ENCODE measurements at regions of chr11 and their contacts with region 1.

Region 1: GRCh38 chr11:128522055-128522942 is 65.1 kb downstream of the ETS1 start:
- DNase-seq: peak; percentile 70 to 93 (median 80)
- ATAC-seq: peak; percentile 76 to 82 (median 80)
- H3K4me3 ChIP-seq: peak overlapping the region; percentile 68 to 99
- H3K4me3 Mint-ChIP-seq: peak overlapping the region; percentile 96 to 99 (median 98)
- H3K27ac ChIP-seq: peak overlapping the region; percentile 93
- H3K27ac Mint-ChIP-seq: peak overlapping the region; percentile 98
- H3K4me1 ChIP-seq: peaks cover 37 to 40% of the 10 kb centered on the region in 2 experiments
- H3K4me1 Mint-ChIP-seq: peaks cover 45 to 65% (median 50%) of the 10 kb centered on the region in 3 donors
- H3K27me3 ChIP-seq: no peaks in the 10 kb centered on the region
- H3K27me3 Mint-ChIP-seq: no peaks in the 10 kb centered on the region

Region 2: GRCh38 chr11:128190312-128190711 is 332.0 kb before region 1 on chr11:
- CTCF ChIA-PET with region 1: interaction called in 1 of 2 experiments, 10 read pairs
- POLR2A ChIA-PET with region 1: no interaction called
- DNase-seq: peak in 25 of 35 experiments; percentile 4 to 74 (median 32)
- ATAC-seq: peak in 2 of 4 experiments; percentile 37 to 51
- H3K4me3 ChIP-seq: no peak overlapping the region
- H3K4me3 Mint-ChIP-seq: peak overlapping the region in 1 of 3 donors; percentile 46
- H3K27ac ChIP-seq: peak overlapping the region; percentile 3
- H3K27ac Mint-ChIP-seq: peak overlapping the region; percentile 35 to 66
- H3K4me1 ChIP-seq: peaks cover 21 to 41% of the 10 kb centered on the region in 2 experiments
- H3K4me1 Mint-ChIP-seq: peaks cover 31 to 44% (median 37%) of the 10 kb centered on the region in 3 donors
- H3K27me3 ChIP-seq: no peaks in the 10 kb centered on the region
- H3K27me3 Mint-ChIP-seq: no peaks in the 10 kb centered on the region

Region 3: GRCh38 chr11:128323381-128323780 is 198.9 kb before region 1 on chr11:
- CTCF ChIA-PET with region 1: interaction called in 1 of 2 experiments, 12 read pairs
- POLR2A ChIA-PET with region 1: interaction called, 3 to 12 read pairs
- DNase-seq: peak in 25 of 35 experiments; percentile 25 to 77 (median 45)
- ATAC-seq: peak in 1 of 4 experiments; percentile 12
- H3K4me3 ChIP-seq: no peak overlapping the region
- H3K4me3 Mint-ChIP-seq: peak overlapping the region in 2 of 3 donors; percentile 37 to 71
- H3K27ac ChIP-seq: peak overlapping the region; percentile 98
- H3K27ac Mint-ChIP-seq: peak overlapping the region; percentile 97 to 99
- H3K4me1 ChIP-seq: peaks cover 74 to 83% of the 10 kb centered on the region in 2 experiments
- H3K4me1 Mint-ChIP-seq: peaks cover 87 to 92% (median 90%) of the 10 kb centered on the region in 3 donors
- H3K27me3 ChIP-seq: no peaks in the 10 kb centered on the region
- H3K27me3 Mint-ChIP-seq: no peaks in the 10 kb centered on the region

Region 4: DNA sequence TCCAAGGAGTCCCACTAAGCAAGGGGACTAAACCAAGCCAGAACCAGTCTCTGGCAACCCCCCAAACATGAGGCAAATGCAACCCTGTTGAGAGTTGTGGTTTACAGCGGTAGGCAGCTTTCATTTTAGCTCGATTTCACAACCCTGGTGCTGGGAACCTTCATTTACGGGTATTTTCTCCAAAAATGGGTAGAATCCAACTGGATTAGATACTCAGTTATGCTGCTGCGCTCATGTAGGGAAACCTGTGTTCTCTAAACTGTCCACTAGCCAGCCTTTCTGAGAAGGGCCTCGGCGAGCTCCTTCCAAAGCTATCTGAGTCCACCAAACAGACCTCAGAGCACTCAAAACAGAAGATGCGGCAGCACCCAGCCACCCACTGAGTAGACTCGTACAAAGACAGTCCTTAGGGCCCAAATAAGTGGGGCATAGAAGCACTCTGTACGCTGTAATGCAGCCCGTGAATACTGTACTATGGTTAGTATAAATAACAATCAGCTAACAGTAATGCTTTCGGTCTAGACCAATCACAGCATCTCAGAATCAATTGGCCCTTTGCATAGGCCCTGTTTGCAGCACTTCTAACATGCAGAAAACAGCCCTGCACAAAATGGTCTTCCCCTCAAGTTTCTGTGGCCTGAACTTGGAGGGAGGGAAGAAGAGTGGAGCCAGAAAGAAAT is 39.6 kb before region 1 on chr11:
- CTCF ChIA-PET with region 1: interaction called in 1 of 2 experiments, 6 read pairs
- POLR2A ChIA-PET with region 1: interaction called, 6 to 19 read pairs
- DNase-seq: peak in 30 of 35 experiments; percentile 38 to 85 (median 69)
- ATAC-seq: peak; percentile 66 to 75 (median 72)
- H3K4me3 ChIP-seq: peak overlapping the region in 1 of 2 donors; percentile 17
- H3K4me3 Mint-ChIP-seq: peak overlapping the region; percentile 63 to 99 (median 77)
- H3K27ac ChIP-seq: peak overlapping the region; percentile 96
- H3K27ac Mint-ChIP-seq: peak overlapping the region; percentile 98
- H3K4me1 ChIP-seq: peaks cover 76 to 84% of the 10 kb centered on the region in 2 experiments
- H3K4me1 Mint-ChIP-seq: peaks cover 96 to 100% (median 97%) of the 10 kb centered on the region in 3 donors
- H3K27me3 ChIP-seq: no peaks in the 10 kb centered on the region
- H3K27me3 Mint-ChIP-seq: no peaks in the 10 kb centered on the region

Region 5: DNA sequence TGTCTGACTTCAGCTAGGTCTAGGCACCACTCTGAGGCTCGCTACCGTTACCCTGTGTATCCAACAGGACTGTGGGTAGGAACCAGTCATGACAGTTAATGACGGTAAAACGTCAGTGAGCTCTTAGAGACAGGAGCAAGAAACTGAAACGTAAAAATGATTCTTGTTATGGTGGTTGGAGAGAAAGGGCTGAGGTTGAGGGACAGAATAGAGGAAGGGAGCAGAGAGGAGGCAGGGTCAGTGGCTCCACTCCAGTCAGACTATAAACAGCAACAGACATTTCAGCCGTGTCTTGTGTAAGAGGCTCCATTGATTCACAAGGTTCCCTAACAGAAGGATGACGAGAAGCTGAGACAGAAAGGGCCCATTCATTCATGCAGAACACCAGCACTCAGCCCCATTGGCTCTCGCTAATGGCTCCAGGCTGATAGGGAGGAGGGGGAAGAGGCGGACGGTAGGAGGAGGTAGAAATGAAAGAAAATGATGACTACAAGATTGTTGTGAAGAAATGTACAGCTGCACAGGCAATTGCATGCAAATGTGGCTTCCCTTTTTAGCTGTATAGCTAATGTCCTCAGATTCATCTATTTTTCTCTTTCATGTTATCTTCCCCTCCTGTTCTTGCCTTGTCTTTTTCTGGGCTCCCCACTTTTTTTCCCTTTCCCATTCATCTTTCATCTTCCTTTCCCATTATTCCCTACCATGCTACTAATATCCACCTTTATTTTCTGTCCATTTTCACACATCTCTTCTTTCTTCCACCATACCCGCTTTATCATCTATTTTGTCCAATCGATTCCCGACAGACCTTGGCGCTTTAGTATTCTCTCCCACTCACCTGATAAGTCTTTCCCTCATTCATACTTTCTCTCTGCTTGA is 30.7 kb after region 1 on chr11:
- CTCF ChIA-PET with region 1: interaction called in 1 of 2 experiments, 7 read pairs
- POLR2A ChIA-PET with region 1: interaction called in 1 of 2 experiments, 10 read pairs
- DNase-seq: peak in 3 of 35 experiments; percentile 20 to 44 (median 40)
- ATAC-seq: peak in 3 of 4 experiments; percentile 11 to 21 (median 19)
- H3K4me3 ChIP-seq: no peak overlapping the region
- H3K4me3 Mint-ChIP-seq: peak overlapping the region in 2 of 3 donors; percentile 26 to 35
- H3K27ac ChIP-seq: peak overlapping the region; percentile 82
- H3K27ac Mint-ChIP-seq: peak overlapping the region; percentile 80 to 98
- H3K4me1 ChIP-seq: peaks cover 36 to 61% of the 10 kb centered on the region in 2 experiments
- H3K4me1 Mint-ChIP-seq: peaks cover 62 to 63% (median 63%) of the 10 kb centered on the region in 3 donors
- H3K27me3 ChIP-seq: no peaks in the 10 kb centered on the region
- H3K27me3 Mint-ChIP-seq: no peaks in the 10 kb centered on the region

Region 6: GRCh38 chr11:128701086-128701485 is 178.8 kb after region 1 on chr11:
- CTCF ChIA-PET with region 1: no interaction called
- POLR2A ChIA-PET with region 1: no interaction called
- DNase-seq: no peak
- ATAC-seq: no peak
- H3K4me3 ChIP-seq: no peak overlapping the region
- H3K4me3 Mint-ChIP-seq: peak overlapping the region in 1 of 3 donors; percentile 16
- H3K27ac ChIP-seq: no peak overlapping the region
- H3K27ac Mint-ChIP-seq: peak overlapping the region; percentile 56 to 77
- H3K4me1 ChIP-seq: peaks cover 64 to 69% of the 10 kb centered on the region in 2 experiments
- H3K4me1 Mint-ChIP-seq: peaks cover 96 to 100% (median 97%) of the 10 kb centered on the region in 3 donors
- H3K27me3 ChIP-seq: no peaks in the 10 kb centered on the region
- H3K27me3 Mint-ChIP-seq: no peaks in the 10 kb centered on the region

Region 7: GRCh38 chr11:128765571-128766549 is 243.6 kb after region 1 on chr11:
- CTCF ChIA-PET with region 1: interaction called in 1 of 2 experiments, 17 read pairs
- POLR2A ChIA-PET with region 1: no interaction called
- DNase-seq: no peak
- ATAC-seq: no peak
- H3K4me3 ChIP-seq: no peak overlapping the region
- H3K4me3 Mint-ChIP-seq: no peak overlapping the region
- H3K27ac ChIP-seq: no peak overlapping the region
- H3K27ac Mint-ChIP-seq: peak overlapping the region in 1 of 2 donors; percentile 2
- H3K4me1 ChIP-seq: peaks cover 0 to 29% of the 10 kb centered on the region in 2 experiments
- H3K4me1 Mint-ChIP-seq: peaks cover 23 to 51% (median 45%) of the 10 kb centered on the region in 3 donors
- H3K27me3 ChIP-seq: no peaks in the 10 kb centered on the region
- H3K27me3 Mint-ChIP-seq: no peaks in the 10 kb centered on the region